Colonic mucosa (tissue), 4 donors: ENCODE measurements at regions of chr6 and their contacts with region 1.

Region 1: GRCh38 chr6:31366693-31367470 is 9.9 kb upstream of the HLA-B start:
- DNase-seq: peak; percentile 94
- H3K4me3 ChIP-seq: peak overlapping the region; percentile 3
- H3K27ac ChIP-seq: no peak overlapping the region
- H3K4me1 ChIP-seq: no peaks in the 10 kb centered on the region
- H3K27me3 ChIP-seq: no peaks in the 10 kb centered on the region
- CTCF ChIP-seq: peak; percentile 80

Region 2: GRCh38 chr6:31197559-31198305 is 169.2 kb before region 1 on chr6:
- intact Hi-C with region 1: loop called (anchors 2 kb)
- DNase-seq: peak; percentile 96
- H3K4me3 ChIP-seq: peak overlapping the region; percentile 54
- H3K27ac ChIP-seq: peak overlapping the region; percentile 99
- H3K4me1 ChIP-seq: peaks cover 7% of the 10 kb centered on the region
- H3K27me3 ChIP-seq: no peaks in the 10 kb centered on the region
- CTCF ChIP-seq: no peak

Region 3: GRCh38 chr6:31680840-31681671 is 314.2 kb after region 1 on chr6 and contains the start of gene LY6G5C:
- intact Hi-C with region 1: no loop called
- DNase-seq: peak; percentile 86
- H3K4me3 ChIP-seq: peak within 1 kb of the TSS; percentile 41
- H3K27ac ChIP-seq: peak within 1 kb of the TSS; percentile 30
- H3K4me1 ChIP-seq: peaks cover 9% of the 10 kb centered on the region
- H3K27me3 ChIP-seq: no peaks in the 10 kb centered on the region
- CTCF ChIP-seq: peak; percentile 66
- total RNA-seq, gene LY6G5C: 1.9 to 2.8 TPM

Region 4: GRCh38 chr6:31717499-31718222 is 350.8 kb after region 1 on chr6:
- intact Hi-C with region 1: no loop called
- DNase-seq: no peak
- H3K4me3 ChIP-seq: no peak overlapping the region
- H3K27ac ChIP-seq: no peak overlapping the region
- H3K4me1 ChIP-seq: peaks cover 5% of the 10 kb centered on the region
- H3K27me3 ChIP-seq: no peaks in the 10 kb centered on the region
- CTCF ChIP-seq: no peak